Activated CD4-positive, alpha-beta memory T cell treated with anti-CD3 and anti-CD28 coated beads for 36 hours (primary cell): ENCODE measurements at regions of chr6 and their contacts with region 1.

Region 1: GRCh38 chr6:131269565-131270391 is 134.5 kb downstream of the AKAP7 start:
- DNase-seq: no peak
- H3K4me3 Mint-ChIP-seq: no peak overlapping the region
- H3K27ac Mint-ChIP-seq: peak overlapping the region; percentile 33
- H3K4me1 Mint-ChIP-seq: peaks cover 24% of the 10 kb centered on the region
- H3K27me3 Mint-ChIP-seq: no peaks in the 10 kb centered on the region

Region 2: DNA sequence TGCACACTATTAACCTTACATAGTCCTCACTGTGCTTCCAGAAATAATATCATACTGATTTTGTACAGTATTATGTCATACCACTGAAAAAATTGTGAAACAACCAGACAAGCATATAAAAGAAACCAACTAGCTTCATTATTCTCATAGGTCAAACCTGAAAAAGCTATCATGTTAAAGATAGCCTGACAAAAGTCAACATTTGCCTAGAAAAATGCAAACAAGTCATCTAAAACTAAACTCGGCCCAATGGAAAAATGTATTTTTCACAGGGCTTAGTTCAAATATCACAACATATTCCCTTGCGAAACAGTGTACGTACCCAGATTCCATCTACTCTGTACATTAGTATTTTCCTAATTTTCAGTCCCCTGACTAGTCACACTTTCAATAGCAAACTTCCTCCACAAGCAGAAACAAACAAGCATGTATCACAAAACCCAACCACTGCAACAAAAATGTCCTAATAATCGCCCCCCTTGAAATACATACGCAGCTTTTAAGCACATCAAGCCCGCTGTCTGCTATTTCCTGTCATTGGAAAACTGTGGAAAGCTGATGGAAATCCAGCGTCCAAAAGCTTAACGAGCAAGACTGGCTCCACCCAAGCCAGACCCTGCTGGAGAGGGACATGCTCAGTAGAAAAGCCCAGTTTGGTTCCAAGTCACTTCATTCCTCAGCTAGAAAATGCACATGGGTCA is 299.8 kb before region 1 on chr6:
- CTCF ChIA-PET with region 1: no interaction called
- POLR2A ChIA-PET with region 1: no interaction called
- intact Hi-C with region 1: no loop called
- DNase-seq: no peak
- H3K4me3 Mint-ChIP-seq: no peak overlapping the region
- H3K27ac Mint-ChIP-seq: no peak overlapping the region
- H3K4me1 Mint-ChIP-seq: peaks cover 5% of the 10 kb centered on the region
- H3K27me3 Mint-ChIP-seq: no peaks in the 10 kb centered on the region

Region 3: GRCh38 chr6:131065112-131065823 is 204.5 kb before region 1 on chr6:
- CTCF ChIA-PET with region 1: no interaction called
- POLR2A ChIA-PET with region 1: no interaction called
- intact Hi-C with region 1: no loop called
- DNase-seq: no peak
- H3K4me3 Mint-ChIP-seq: no peak overlapping the region
- H3K27ac Mint-ChIP-seq: no peak overlapping the region
- H3K4me1 Mint-ChIP-seq: peaks cover 24% of the 10 kb centered on the region
- H3K27me3 Mint-ChIP-seq: no peaks in the 10 kb centered on the region

Region 4: GRCh38 chr6:131281471-131282270 is 11.9 kb after region 1 on chr6:
- CTCF ChIA-PET with region 1: interaction called, 3 read pairs
- POLR2A ChIA-PET with region 1: no interaction called
- intact Hi-C with region 1: loop called (anchors 1 kb)
- DNase-seq: peak; percentile 77
- H3K4me3 Mint-ChIP-seq: peak overlapping the region; percentile 71
- H3K27ac Mint-ChIP-seq: peak overlapping the region; percentile 89
- H3K4me1 Mint-ChIP-seq: peaks cover 22% of the 10 kb centered on the region
- H3K27me3 Mint-ChIP-seq: no peaks in the 10 kb centered on the region